ENCODE measurements at regions of chr1 and their contacts with region 1.

Region 1: DNA sequence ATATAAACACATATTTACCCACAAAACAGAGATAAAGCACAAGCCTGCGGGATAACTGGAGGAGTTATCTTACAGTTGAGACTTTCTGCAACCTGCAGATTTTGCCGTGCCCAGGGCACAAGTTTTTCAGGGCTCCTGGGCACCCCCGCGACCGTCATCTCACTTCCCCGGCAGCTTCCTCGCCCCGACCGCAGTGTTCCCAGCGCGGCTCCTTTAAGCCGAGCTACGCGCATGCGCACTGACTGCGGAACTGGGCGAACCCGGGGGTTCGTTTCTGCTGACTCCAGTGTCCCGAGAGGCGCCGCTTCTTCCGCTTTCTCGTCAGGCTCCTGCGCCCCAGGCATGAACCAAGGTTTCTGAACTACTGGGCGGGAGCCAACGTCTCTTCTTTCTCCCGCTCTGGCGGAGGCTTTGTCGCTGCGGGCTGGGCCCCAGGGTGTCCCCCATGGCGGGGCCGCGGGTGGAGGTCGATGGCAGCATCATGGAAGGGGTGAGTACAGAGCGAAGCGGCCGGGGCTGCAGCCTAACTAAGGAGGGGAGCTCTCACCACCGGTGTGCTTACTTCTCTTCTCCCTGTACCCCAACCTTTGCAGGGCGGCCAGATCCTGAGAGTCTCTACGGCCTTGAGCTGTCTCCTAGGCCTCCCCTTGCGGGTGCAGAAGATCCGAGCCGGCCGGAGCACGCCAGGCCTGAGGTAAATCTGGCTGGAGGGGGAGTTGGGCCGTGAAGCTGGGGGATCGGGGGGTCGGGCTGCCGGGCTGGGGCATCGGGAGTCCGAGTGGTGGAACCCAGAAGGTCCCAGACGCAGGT is at the start of gene RTCA:
- DNase-seq: peak; percentile 97
- H3K4me3 Mint-ChIP-seq: peak within 1 kb of the TSS; percentile 100
- H3K27ac Mint-ChIP-seq: peak within 1 kb of the TSS; percentile 97
- H3K4me1 Mint-ChIP-seq: peaks cover 51% of the 10 kb centered on the region
- H3K27me3 Mint-ChIP-seq: peaks cover 5% of the 10 kb centered on the region

Region 2: DNA sequence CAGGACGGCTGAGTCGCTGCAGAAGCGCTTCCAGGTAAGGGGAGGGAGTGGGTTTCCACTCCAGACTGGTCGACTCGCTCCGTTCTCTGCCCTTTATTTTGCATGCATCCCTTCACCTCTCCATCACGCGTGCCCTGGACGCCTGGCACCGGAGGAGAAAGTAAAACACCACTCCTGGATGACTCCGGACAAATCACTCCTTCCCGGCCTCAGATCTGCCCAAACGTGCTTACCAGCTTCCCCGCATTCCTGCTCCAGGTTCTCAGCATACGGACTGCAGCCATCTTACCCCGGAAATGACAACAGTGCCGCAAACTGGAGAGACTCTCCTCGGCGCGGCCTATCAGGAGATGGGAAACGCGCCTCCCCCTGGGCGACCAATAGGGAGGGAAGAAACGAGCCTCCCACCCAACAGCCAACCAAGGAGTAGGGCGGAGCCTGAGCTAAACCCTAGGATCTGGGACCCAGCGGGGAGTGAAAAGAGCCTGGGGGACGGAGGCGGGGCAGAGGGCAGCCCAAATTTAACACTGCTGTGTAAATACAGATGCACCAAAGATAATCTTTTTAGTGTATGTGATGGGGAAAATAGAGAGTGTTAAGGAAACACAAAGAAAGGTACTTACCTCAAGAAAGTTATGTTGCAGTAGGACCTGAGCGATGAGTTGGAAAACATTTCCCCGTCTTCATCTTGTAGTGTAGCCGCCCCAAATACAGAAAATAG is 16.4 kb before region 1 on chr1 and contains the start of gene DBT:
- CTCF ChIA-PET with region 1: interaction called, 12 read pairs
- DNase-seq: peak; percentile 96
- H3K4me3 Mint-ChIP-seq: no peak within 1 kb of the TSS
- H3K27ac Mint-ChIP-seq: no peak within 1 kb of the TSS
- H3K4me1 Mint-ChIP-seq: peaks cover 12% of the 10 kb centered on the region
- H3K27me3 Mint-ChIP-seq: peaks cover 6% of the 10 kb centered on the region

Measured in activated naive CD4-positive, alpha-beta T cell treated with anti-CD3 and anti-CD28 coated beads, Interleukin-2, amount 10 ng/mL, durations not matched to agents 7 days and 5 days (primary cell).